ENCODE measurements at regions of chr5 and their contacts with region 1.

Region 1: DNA sequence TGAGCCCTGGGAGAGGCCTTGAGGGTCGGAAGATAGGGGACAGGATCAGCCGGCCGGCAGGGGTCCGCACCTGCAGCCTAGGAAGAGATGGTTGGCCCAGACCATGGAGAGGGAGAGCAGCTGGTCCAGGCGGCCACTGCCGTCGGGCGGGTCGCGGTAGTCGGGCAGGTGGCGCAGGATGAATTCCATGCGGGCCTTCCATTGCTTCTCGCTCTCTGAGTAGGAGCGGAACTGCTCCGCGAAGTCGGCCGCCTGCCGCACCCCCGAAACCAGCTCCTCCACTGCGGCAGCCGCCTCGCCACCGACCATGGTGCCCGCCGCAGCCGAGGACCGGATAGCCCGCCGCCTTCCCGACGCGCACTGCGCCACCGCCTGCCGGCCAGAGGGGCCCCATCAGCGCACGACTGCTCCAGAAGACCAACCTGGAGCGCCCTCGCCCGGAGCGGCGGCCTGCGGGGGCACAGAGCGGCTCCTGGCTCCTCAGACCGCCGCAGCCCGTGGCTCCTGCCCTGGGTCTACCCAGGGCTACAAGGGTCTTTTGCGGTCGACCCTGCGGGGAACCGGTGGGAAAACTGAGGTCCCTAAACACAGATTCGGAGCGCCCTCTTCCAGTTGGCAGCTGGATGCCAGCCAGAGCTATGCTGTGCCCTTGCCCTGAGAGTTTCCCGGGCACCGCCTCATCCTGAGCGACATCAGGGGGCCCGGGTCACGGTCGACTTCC is at the start of gene CDKN2AIPNL:
- DNase-seq: peak; percentile 59 to 95
- H3K4me3 ChIP-seq: peak within 1 kb of the TSS; percentile 75 to 97 (median 86)
- H3K27ac ChIP-seq: peak within 1 kb of the TSS; percentile 73
- H3K4me1 ChIP-seq: peaks cover 5 to 10% (median 8%) of the 10 kb centered on the region in 4 experiments
- H3K27me3 ChIP-seq: no peaks in the 10 kb centered on the region
- CTCF ChIP-seq: peak; percentile 73 to 94 (median 78)
- EP300 ChIP-seq: peak in 1 of 2 experiments; percentile 78; a peak in 1 of 3 replicates
- POLR2A ChIP-seq: peak; percentile 84 to 94
- RAD21 ChIP-seq: peak; percentile 52 to 74
- total RNA-seq, gene CDKN2AIPNL: 54.3 and 56.3 TPM in 2 replicates

Region 2: DNA sequence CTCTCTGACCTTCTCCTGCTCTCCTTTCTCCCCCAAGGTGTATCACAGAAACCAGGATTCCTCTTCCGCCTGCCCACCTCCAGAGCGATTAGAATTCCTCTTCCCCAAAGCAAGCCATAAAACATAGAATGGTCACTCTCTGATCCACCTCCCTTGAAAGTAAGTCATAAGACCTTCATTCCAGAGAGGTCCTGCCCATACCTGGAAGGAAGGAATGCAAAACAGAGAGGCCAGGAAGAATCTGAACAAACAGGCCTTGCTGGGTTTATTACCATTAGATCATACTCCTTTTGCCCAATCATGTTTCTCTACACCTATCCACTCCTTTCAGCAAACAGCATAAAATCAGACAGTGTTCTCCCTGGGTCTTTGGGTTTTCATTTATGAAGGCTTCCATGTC is 65.7 kb before region 1 on chr5:
- CTCF ChIA-PET with region 1: no interaction called
- POLR2A ChIA-PET with region 1: no interaction called
- DNase-seq: no peak
- H3K4me3 ChIP-seq: peak overlapping the region in 1 of 4 experiments; percentile 15; a peak in 1 of 8 replicates
- H3K27ac ChIP-seq: peak overlapping the region; percentile 43
- H3K4me1 ChIP-seq: peaks cover 0 to 6% (median 3%) of the 10 kb centered on the region in 4 experiments; a peak in 3 of 7 replicates
- H3K27me3 ChIP-seq: no peaks in the 10 kb centered on the region
- CTCF ChIP-seq: no peak
- EP300 ChIP-seq: no peak
- POLR2A ChIP-seq: no peak
- RAD21 ChIP-seq: no peak

Region 3: DNA sequence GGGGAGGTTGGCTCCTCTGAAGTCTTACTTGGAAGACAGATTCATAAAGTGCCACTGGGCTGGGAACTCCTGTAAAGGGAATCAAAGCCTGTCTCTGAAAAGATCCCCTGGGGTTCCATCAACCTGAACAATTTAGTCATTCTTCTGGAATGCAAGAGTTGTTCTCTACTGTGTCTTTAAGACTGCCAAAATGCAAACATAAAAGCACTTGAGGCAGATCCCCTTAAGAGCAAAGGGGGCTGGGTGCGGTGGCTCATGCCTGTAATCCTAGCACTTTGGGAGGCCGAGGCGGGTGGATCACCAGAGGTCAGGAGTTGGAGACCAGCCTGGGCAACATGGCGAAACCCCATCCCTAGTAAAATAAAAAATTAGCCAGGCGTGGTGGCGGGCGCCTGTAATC is 16.8 kb before region 1 on chr5:
- CTCF ChIA-PET with region 1: interaction called, 21 read pairs
- POLR2A ChIA-PET with region 1: interaction called, 15 read pairs
- DNase-seq: no peak
- H3K4me3 ChIP-seq: no peak overlapping the region
- H3K27ac ChIP-seq: no peak overlapping the region
- H3K4me1 ChIP-seq: no peaks in the 10 kb centered on the region
- H3K27me3 ChIP-seq: no peaks in the 10 kb centered on the region
- CTCF ChIP-seq: no peak
- EP300 ChIP-seq: no peak
- POLR2A ChIP-seq: no peak
- RAD21 ChIP-seq: no peak

Region 4: GRCh38 chr5:134446938-134447337 is 35.2 kb after region 1 on chr5:
- CTCF ChIA-PET with region 1: interaction called, 6 read pairs
- POLR2A ChIA-PET with region 1: interaction called, 11 read pairs
- DNase-seq: no peak
- H3K4me3 ChIP-seq: no peak overlapping the region
- H3K27ac ChIP-seq: no peak overlapping the region
- H3K4me1 ChIP-seq: peaks cover 0 to 7% (median 0%) of the 10 kb centered on the region in 4 experiments; a peak in 1 of 7 replicates
- H3K27me3 ChIP-seq: no peaks in the 10 kb centered on the region
- CTCF ChIP-seq: no peak
- EP300 ChIP-seq: no peak
- POLR2A ChIP-seq: no peak
- RAD21 ChIP-seq: no peak

Region 5: GRCh38 chr5:134511788-134512650 is 100.3 kb after region 1 on chr5:
- CTCF ChIA-PET with region 1: interaction called, 63 read pairs
- POLR2A ChIA-PET with region 1: interaction called, 10 read pairs
- DNase-seq: peak in 1 of 2 experiments; percentile 73
- H3K4me3 ChIP-seq: peak overlapping the region in 2 of 4 experiments; percentile 20 to 32; a peak in 3 of 8 replicates
- H3K27ac ChIP-seq: peak overlapping the region; percentile 77
- H3K4me1 ChIP-seq: peaks cover 16 to 23% (median 19%) of the 10 kb centered on the region in 4 experiments
- H3K27me3 ChIP-seq: no peaks in the 10 kb centered on the region
- CTCF ChIP-seq: peak; percentile 49 to 56 (median 54)
- EP300 ChIP-seq: no peak
- POLR2A ChIP-seq: peak; percentile 52 to 63
- RAD21 ChIP-seq: peak; percentile 61 to 73

Region 6: GRCh38 chr5:134547579-134547978 is 135.9 kb after region 1 on chr5:
- CTCF ChIA-PET with region 1: interaction called, 15 read pairs
- POLR2A ChIA-PET with region 1: no interaction called
- DNase-seq: no peak
- H3K4me3 ChIP-seq: no peak overlapping the region
- H3K27ac ChIP-seq: no peak overlapping the region
- H3K4me1 ChIP-seq: peaks cover 3 to 7% (median 5%) of the 10 kb centered on the region in 4 experiments; a peak in 5 of 7 replicates
- H3K27me3 ChIP-seq: no peaks in the 10 kb centered on the region
- CTCF ChIP-seq: no peak
- EP300 ChIP-seq: no peak
- POLR2A ChIP-seq: no peak
- RAD21 ChIP-seq: no peak

Region 7: GRCh38 chr5:134586866-134587524 is 175.3 kb after region 1 on chr5:
- CTCF ChIA-PET with region 1: interaction called, 30 read pairs
- POLR2A ChIA-PET with region 1: interaction called, 4 read pairs
- DNase-seq: peak; percentile 81 to 99
- H3K4me3 ChIP-seq: 0 out of 8 replicates have a peak overlapping the region, but pooled peaks of 1 of the 4 experiments have one; percentile 38
- H3K27ac ChIP-seq: no peak overlapping the region
- H3K4me1 ChIP-seq: peaks cover 6 to 12% (median 9%) of the 10 kb centered on the region in 4 experiments
- H3K27me3 ChIP-seq: no peaks in the 10 kb centered on the region
- CTCF ChIP-seq: peak in 2 of 3 experiments; percentile 91 to 97; a peak in 3 of 4 replicates
- EP300 ChIP-seq: no peak
- POLR2A ChIP-seq: no peak
- RAD21 ChIP-seq: peak; percentile 89 to 90

Region 8: DNA sequence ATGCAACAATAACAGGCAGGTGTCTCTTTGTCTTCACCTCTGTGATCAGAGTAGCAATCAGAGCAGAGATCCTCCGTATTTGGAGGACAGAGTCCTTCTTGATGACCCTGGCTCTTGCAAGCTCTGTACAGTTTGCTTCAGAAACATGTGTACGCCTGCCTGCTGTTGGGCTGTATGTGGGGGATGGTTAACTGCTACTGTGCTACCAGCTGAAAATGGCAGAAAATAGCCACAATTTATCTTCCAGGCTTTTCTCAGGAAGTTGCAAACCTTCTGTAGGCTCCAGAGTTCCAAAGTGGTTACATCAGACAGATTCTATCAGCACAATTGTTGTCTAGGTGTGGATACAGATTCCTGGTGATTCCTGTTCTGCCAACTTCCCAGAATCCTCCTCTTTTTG is 382.4 kb after region 1 on chr5:
- CTCF ChIA-PET with region 1: no interaction called
- POLR2A ChIA-PET with region 1: no interaction called
- DNase-seq: no peak
- H3K4me3 ChIP-seq: no peak overlapping the region
- H3K27ac ChIP-seq: no peak overlapping the region
- H3K4me1 ChIP-seq: no peaks in the 10 kb centered on the region
- H3K27me3 ChIP-seq: no peaks in the 10 kb centered on the region
- CTCF ChIP-seq: no peak
- EP300 ChIP-seq: no peak
- POLR2A ChIP-seq: no peak
- RAD21 ChIP-seq: no peak